ENCODE measurements at regions of chr3 and their contacts with region 1.

Region 1: GRCh38 chr3:184543843-184544512 is 17.6 kb upstream of the EPHB3 start:
- DNase-seq: peak; percentile 86
- ATAC-seq: peak; percentile 80
- H3K4me3 ChIP-seq: peak overlapping the region in 1 of 2 experiments; percentile 17; a peak in 1 of 4 replicates
- H3K27ac ChIP-seq: no peak overlapping the region
- H3K4me1 ChIP-seq: peaks cover 0 to 11% of the 10 kb centered on the region in 2 experiments; a peak in 2 of 4 replicates
- H3K27me3 ChIP-seq: no peaks in the 10 kb centered on the region
- CTCF ChIP-seq: peak; percentile 79 to 95 (median 93)
- POLR2A ChIP-seq: no peak
- RAD21 ChIP-seq: peak; percentile 99

Region 2: DNA sequence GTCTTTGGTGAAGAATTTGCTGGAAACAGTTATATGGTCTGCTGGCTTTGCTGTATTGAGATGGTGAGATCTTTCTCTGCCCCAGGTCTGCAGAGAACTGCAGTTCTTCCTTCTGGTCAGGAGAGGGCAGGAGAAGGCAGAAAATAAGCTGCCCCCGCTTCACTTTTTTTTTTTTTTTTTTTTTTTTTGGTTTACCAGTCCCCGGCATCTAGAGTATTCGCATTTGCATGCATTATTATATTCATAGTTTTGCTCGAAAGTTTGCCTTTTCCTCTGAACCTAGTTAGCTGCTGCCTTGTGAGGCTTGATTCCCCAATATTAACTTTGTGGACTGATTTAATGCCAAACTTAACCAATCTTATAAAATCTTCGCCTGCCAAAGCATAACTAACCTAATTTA is 648.7 kb before region 1 on chr3:
- CTCF ChIA-PET with region 1: interaction called, 3 read pairs
- POLR2A ChIA-PET with region 1: no interaction called
- RAD21 ChIA-PET with region 1: no interaction called
- intact Hi-C with region 1: loop called (anchors 5 kb)
- DNase-seq: peak; percentile 38
- ATAC-seq: peak; percentile 76
- H3K4me3 ChIP-seq: no peak overlapping the region
- H3K27ac ChIP-seq: no peak overlapping the region
- H3K4me1 ChIP-seq: no peaks in the 10 kb centered on the region
- H3K27me3 ChIP-seq: no peaks in the 10 kb centered on the region
- CTCF ChIP-seq: peak; percentile 77 to 84 (median 82)
- POLR2A ChIP-seq: no peak
- RAD21 ChIP-seq: peak; percentile 92

Region 3: GRCh38 chr3:184362668-184363540 is 181.1 kb before region 1 on chr3:
- CTCF ChIA-PET with region 1: interaction called, 3 read pairs
- POLR2A ChIA-PET with region 1: interaction called, 6 read pairs
- RAD21 ChIA-PET with region 1: no interaction called
- intact Hi-C with region 1: loop called (anchors 2 kb)
- DNase-seq: peak; percentile 98
- ATAC-seq: peak; percentile 80
- H3K4me3 ChIP-seq: peak overlapping the region; percentile 95 to 96
- H3K27ac ChIP-seq: peak overlapping the region; percentile 96
- H3K4me1 ChIP-seq: peaks cover 9 to 25% of the 10 kb centered on the region in 2 experiments
- H3K27me3 ChIP-seq: no peaks in the 10 kb centered on the region
- CTCF ChIP-seq: peak in 2 of 3 experiments; percentile 47 to 53; a peak in 4 of 6 replicates
- POLR2A ChIP-seq: peak; percentile 89
- RAD21 ChIP-seq: no peak

Region 4: DNA sequence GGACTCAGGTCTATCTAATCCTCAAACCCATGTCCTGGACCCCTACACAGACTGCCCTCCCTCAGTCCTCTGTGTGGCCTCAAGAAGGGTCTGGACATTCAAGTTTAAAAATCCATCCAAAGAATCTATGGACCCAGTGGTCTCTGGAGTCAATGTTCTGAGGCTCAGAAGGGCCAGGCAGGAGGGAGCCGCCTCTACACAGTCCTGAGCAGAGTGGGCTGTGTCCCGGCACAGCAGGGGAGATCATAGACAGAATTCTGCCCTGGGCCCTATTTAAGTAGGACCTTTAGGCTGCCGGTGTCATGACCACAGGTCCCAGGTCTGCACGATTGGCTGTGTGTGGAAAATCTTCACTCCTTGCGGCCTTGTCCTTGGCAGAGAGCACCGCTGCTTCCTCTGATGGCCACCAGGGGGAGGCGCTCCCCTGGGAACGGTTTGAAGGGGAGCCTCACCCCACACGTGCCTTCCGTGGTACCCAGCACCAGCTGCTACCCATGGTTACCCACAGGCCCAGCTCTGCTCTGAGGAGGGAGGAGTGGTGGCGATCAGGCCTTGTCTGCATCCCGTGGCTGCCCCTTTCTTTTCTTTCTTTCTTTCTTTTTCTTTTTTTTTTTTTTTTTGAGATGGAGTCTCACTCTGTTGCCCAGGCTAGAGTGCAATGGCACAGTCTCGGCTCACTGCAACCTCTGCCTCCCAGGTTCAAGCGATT is 126.2 kb before region 1 on chr3:
- CTCF ChIA-PET with region 1: interaction called, 3 read pairs
- POLR2A ChIA-PET with region 1: no interaction called
- RAD21 ChIA-PET with region 1: no interaction called
- intact Hi-C with region 1: loop called (anchors 1 kb)
- DNase-seq: peak; percentile 52
- ATAC-seq: peak; percentile 97
- H3K4me3 ChIP-seq: no peak overlapping the region
- H3K27ac ChIP-seq: no peak overlapping the region
- H3K4me1 ChIP-seq: no peaks in the 10 kb centered on the region
- H3K27me3 ChIP-seq: no peaks in the 10 kb centered on the region
- CTCF ChIP-seq: peak; percentile 90 to 95 (median 94)
- POLR2A ChIP-seq: no peak
- RAD21 ChIP-seq: peak; percentile 97

Region 5: DNA sequence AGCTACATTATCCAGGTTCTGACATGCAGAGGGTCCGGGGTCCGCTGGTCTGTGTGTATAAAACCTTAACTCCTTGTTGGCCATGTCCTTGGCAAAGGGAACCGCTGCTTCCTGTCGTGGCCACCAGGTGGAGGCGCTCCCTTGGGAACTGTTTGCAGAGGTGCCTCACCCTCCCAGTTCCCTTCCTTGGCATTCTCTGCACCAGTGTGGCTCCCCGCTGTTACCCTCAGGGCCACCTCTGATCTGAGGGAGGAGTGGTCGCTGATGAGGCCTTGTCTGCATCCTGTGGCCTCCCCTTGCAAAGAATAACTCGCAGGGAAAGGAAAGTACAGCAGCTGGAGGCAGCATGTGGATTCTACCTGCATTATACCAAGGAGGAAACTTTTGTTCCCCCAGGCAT is 74.6 kb before region 1 on chr3:
- CTCF ChIA-PET with region 1: interaction called, 8 read pairs
- POLR2A ChIA-PET with region 1: no interaction called
- RAD21 ChIA-PET with region 1: no interaction called
- intact Hi-C with region 1: loop called (anchors 1 kb)
- DNase-seq: peak; percentile 45
- ATAC-seq: peak; percentile 92
- H3K4me3 ChIP-seq: no peak overlapping the region
- H3K27ac ChIP-seq: no peak overlapping the region
- H3K4me1 ChIP-seq: peaks cover 2 to 12% of the 10 kb centered on the region in 2 experiments; a peak in 1 of 4 replicates
- H3K27me3 ChIP-seq: no peaks in the 10 kb centered on the region
- CTCF ChIP-seq: peak; percentile 89 to 93 (median 93)
- POLR2A ChIP-seq: no peak
- RAD21 ChIP-seq: peak; percentile 93

Measured in HCT116 (cell line).